ENCODE measurements at regions of chr1 and their contacts with region 1.

Region 1: GRCh38 chr1:244864253-244865027 is at the start of gene HNRNPU:
- DNase-seq: peak; percentile 96
- H3K4me3 ChIP-seq: peak within 1 kb of the TSS; percentile 91 to 97 (median 95)
- H3K27ac ChIP-seq: peak within 1 kb of the TSS; percentile 98
- H3K4me1 ChIP-seq: peaks cover 22% of the 10 kb centered on the region
- H3K27me3 ChIP-seq: no peaks in the 10 kb centered on the region
- CTCF ChIP-seq: peak in 1 of 2 donors; percentile 45
- total RNA-seq, gene HNRNPU: 167 to 292 TPM

Region 2: GRCh38 chr1:244652699-244653466 is 211.6 kb before region 1 on chr1 and contains the start of gene DESI2:
- CTCF ChIA-PET with region 1: no interaction called
- dilution Hi-C with region 1: no loop called
- in situ Hi-C with region 1: no loop called
- intact Hi-C with region 1: loop called (anchors 2 kb)
- DNase-seq: peak; percentile 99
- H3K4me3 ChIP-seq: peak within 1 kb of the TSS; percentile 79 to 95 (median 89)
- H3K27ac ChIP-seq: peak within 1 kb of the TSS; percentile 83
- H3K4me1 ChIP-seq: peaks cover 17% of the 10 kb centered on the region
- H3K27me3 ChIP-seq: no peaks in the 10 kb centered on the region
- CTCF ChIP-seq: peak; percentile 9 to 52
- total RNA-seq, gene DESI2: 38.5 to 63.3 TPM

Region 3: GRCh38 chr1:244796718-244797406 is 67.6 kb before region 1 on chr1:
- CTCF ChIA-PET with region 1: no interaction called
- dilution Hi-C with region 1: no loop called
- in situ Hi-C with region 1: no loop called
- intact Hi-C with region 1: loop called (anchors 2 kb)
- DNase-seq: peak; percentile 44
- H3K4me3 ChIP-seq: no peak overlapping the region
- H3K27ac ChIP-seq: no peak overlapping the region
- H3K4me1 ChIP-seq: no peaks in the 10 kb centered on the region
- H3K27me3 ChIP-seq: no peaks in the 10 kb centered on the region
- CTCF ChIP-seq: peak; percentile 74 to 91

Region 4: DNA sequence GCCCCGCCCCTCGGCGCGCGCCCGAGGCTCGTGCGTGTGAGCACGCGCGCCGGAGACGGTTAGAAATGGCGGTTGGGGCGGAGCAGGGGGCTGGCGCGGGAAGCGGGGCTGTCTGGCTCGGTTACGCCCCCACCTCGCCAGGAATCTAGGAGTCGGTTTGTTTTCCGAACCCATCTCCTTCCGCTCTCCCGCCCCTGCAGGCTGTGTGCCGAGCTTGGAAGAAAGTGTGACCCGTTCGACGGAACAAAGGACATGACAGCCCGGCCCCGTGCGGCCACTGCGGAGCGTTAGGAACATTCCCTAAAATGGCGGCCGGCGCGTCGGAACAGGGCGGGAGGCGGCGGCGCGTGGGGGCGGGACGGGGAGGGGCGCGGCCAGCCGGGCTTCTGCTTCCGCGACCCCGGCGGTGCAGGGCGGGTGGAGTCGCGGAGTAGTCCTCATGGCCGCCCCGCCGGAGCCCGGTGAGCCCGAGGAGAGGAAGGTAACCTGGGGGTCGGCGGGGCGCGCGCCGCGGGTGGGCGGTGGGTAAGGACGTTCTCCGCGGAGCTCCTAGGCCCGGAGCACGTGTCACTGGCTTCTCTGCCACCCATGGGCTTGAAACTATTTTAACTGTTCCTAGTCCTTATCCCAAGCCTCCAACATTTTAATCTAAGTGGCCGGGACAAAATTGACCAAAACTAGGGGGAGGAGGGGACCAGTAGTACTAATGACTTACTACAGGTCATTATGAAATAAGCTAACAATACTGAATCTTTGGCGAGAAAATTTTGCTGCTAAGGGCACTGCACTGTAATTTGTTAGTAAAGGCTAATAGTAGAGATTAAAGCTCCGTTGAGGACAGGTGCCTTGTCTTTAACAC is 28.9 kb before region 1 on chr1 and contains the start of gene COX20:
- CTCF ChIA-PET with region 1: interaction called, 3 read pairs
- dilution Hi-C with region 1: no loop called
- in situ Hi-C with region 1: no loop called
- intact Hi-C with region 1: loop called (anchors 1 kb)
- DNase-seq: peak; percentile 86
- H3K4me3 ChIP-seq: peak within 1 kb of the TSS; percentile 72 to 83 (median 81)
- H3K27ac ChIP-seq: peak within 1 kb of the TSS; percentile 94
- H3K4me1 ChIP-seq: peaks cover 12% of the 10 kb centered on the region
- H3K27me3 ChIP-seq: no peaks in the 10 kb centered on the region
- CTCF ChIP-seq: no peak
- total RNA-seq, gene COX20: 13.7 to 35.4 TPM

Region 5: GRCh38 chr1:244970661-244971551 is 106.5 kb after region 1 on chr1:
- CTCF ChIA-PET with region 1: no interaction called
- dilution Hi-C with region 1: no loop called
- in situ Hi-C with region 1: loop called in 1 of 2 experiments (anchors 10 kb)
- intact Hi-C with region 1: loop called (anchors 1 kb)
- DNase-seq: peak; percentile 96
- H3K4me3 ChIP-seq: peak overlapping the region; percentile 62 to 75 (median 68)
- H3K27ac ChIP-seq: peak overlapping the region; percentile 92
- H3K4me1 ChIP-seq: peaks cover 3% of the 10 kb centered on the region
- H3K27me3 ChIP-seq: no peaks in the 10 kb centered on the region
- CTCF ChIP-seq: peak; percentile 3 to 62

Region 6: GRCh38 chr1:245045087-245045881 is 180.8 kb after region 1 on chr1:
- CTCF ChIA-PET with region 1: interaction called, 5 read pairs
- dilution Hi-C with region 1: no loop called
- in situ Hi-C with region 1: loop called in 1 of 2 experiments (anchors 25 kb)
- intact Hi-C with region 1: loop called (anchors 1 kb)
- DNase-seq: peak; percentile 70
- H3K4me3 ChIP-seq: peak overlapping the region in 2 of 3 experiments; percentile 0 to 13
- H3K27ac ChIP-seq: no peak overlapping the region
- H3K4me1 ChIP-seq: peaks cover 6% of the 10 kb centered on the region
- H3K27me3 ChIP-seq: no peaks in the 10 kb centered on the region
- CTCF ChIP-seq: no peak

Region 7: DNA sequence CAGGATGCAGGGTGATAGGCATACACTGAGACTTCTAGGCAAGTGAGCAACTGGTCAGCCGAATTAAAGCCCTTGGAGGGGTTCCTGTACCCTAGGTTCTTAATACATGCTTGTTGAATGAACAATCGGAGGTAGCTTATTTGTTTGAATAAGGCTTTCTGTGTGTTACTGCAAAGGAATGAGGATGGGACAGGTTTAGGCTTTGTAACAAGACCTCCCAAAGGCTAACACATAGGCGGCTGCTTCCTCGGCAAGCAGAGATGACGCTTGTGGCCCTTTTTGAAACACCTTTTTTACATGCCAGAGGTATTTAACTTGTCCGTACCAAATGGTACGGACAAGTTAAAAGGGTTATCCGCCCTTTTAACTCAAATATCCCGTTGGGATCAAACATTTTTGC is 802.0 kb after region 1 on chr1:
- CTCF ChIA-PET with region 1: no interaction called
- dilution Hi-C with region 1: no loop called
- in situ Hi-C with region 1: no loop called
- intact Hi-C with region 1: no loop called
- DNase-seq: no peak
- H3K4me3 ChIP-seq: no peak overlapping the region
- H3K27ac ChIP-seq: no peak overlapping the region
- H3K4me1 ChIP-seq: no peaks in the 10 kb centered on the region
- H3K27me3 ChIP-seq: no peaks in the 10 kb centered on the region
- CTCF ChIP-seq: no peak

Region 8: GRCh38 chr1:246497331-246497915 is 1633.0 kb after region 1 on chr1:
- CTCF ChIA-PET with region 1: no interaction called
- dilution Hi-C with region 1: no loop called
- in situ Hi-C with region 1: no loop called
- intact Hi-C with region 1: loop called (anchors 5 kb)
- DNase-seq: peak; percentile 52
- H3K4me3 ChIP-seq: no peak overlapping the region
- H3K27ac ChIP-seq: no peak overlapping the region
- H3K4me1 ChIP-seq: peaks cover under 1% of the 10 kb centered on the region
- H3K27me3 ChIP-seq: no peaks in the 10 kb centered on the region
- CTCF ChIP-seq: peak; percentile 66 to 68

Measured in mammary epithelial cell (primary cell).